ENCODE measurements at regions of chr7 and their contacts with region 1.

Region 1: GRCh38 chr7:144391823-144392255 is 11.7 kb downstream of the NOBOX start:
- DNase-seq: peak; percentile 35
- H3K4me3 ChIP-seq: peak overlapping the region in 2 of 3 experiments; percentile 13 to 24
- H3K27ac ChIP-seq: no peak overlapping the region
- H3K4me1 ChIP-seq: peaks cover 6% of the 10 kb centered on the region
- H3K27me3 ChIP-seq: no peaks in the 10 kb centered on the region
- CTCF ChIP-seq: peak; percentile 67 to 71

Region 2: DNA sequence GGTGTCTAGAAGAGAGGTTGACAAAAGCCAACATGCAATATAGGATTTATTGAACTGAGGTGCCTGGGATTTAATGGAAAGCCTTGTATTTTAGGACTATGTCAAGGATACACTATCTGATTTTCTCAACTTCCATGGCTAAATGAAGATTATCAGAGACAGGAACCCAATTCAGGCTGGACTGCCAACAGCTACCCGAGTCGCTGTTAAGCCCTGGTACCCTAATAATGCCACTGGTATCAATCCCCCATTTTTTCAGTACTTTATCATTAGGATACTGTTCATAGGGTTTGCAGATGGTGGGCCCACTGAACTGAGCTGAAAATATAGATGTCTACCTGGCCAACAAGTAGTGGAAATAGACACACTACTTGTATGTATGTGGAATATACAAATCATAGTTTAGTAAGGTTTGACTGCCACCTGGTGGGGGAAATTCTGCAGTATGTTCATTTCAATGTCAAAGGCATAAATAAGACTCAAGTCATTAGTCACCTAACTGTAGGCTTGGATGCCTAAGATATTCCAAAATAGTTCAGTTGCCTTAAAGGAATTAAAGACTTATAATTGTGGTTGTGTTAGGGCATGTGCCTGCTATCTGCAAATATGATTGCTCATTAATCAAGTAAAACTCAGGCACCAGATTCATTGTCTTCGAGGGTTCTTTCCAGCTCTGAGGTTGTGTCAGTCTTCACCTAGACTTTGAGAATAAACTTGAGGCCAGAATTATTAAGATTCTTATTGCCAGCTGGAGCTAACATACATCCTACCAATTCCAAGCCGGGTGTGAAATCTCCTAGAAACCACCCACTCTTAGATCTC is 45.7 kb after region 1 on chr7:
- CTCF ChIA-PET with region 1: interaction called, 3 read pairs
- dilution Hi-C with region 1: no loop called
- in situ Hi-C with region 1: no loop called
- intact Hi-C with region 1: loop called (anchors 2 kb)
- DNase-seq: peak; percentile 67
- H3K4me3 ChIP-seq: no peak overlapping the region
- H3K27ac ChIP-seq: no peak overlapping the region
- H3K4me1 ChIP-seq: no peaks in the 10 kb centered on the region
- H3K27me3 ChIP-seq: no peaks in the 10 kb centered on the region
- CTCF ChIP-seq: peak; percentile 69 to 74